WTC11 (cell line): ENCODE measurements at regions of chr11 and their contacts with region 1.

Region 1: DNA sequence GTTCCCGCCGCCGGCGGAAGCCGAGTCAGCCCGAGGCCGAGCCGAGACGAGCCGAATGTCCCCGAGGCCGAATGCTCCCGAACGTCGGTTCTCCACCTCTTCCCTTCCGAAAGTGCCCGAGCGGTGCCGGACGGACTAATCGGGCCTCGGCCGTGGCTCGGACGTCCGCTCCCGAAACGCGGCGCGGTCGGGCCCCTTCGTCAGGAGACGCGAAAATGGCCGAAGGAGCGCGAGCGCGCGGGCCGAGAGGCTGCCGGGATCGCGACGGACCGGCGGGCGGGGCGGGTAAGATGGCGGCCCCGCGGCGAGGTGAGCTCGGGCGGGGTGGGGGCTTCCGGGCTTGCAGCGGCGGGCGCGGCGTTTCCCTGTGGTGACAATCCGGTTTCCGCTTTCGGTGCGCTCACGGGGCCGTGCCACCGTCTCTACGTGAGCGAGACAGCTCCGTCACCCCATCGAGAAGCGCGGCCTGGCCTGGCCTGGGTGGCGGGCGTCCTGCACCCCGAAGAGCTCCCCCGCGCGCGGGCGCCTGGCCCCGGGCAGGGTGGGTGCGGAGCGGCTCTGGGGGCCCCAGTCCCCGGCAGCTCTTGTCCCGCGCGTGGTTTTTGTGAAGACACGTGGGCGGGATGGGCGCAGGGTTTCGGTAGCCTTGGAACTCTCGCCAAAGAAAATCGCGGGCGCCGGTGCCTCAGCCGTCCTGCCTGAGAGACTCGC is at the start of gene TMEM80:
- DNase-seq: peak; percentile 100
- ATAC-seq: peak; percentile 83
- H3K4me3 Mint-ChIP-seq: peak within 1 kb of the TSS; percentile 78
- H3K27ac Mint-ChIP-seq: peak within 1 kb of the TSS; percentile 91
- H3K4me1 Mint-ChIP-seq: peaks cover 34% of the 10 kb centered on the region
- H3K27me3 Mint-ChIP-seq: no peaks in the 10 kb centered on the region
- CTCF ChIP-seq: no peak
- total RNA-seq, gene TMEM80: 23.4 to 28.4 TPM (median 24.5 TPM) in 3 replicates

Region 2: DNA sequence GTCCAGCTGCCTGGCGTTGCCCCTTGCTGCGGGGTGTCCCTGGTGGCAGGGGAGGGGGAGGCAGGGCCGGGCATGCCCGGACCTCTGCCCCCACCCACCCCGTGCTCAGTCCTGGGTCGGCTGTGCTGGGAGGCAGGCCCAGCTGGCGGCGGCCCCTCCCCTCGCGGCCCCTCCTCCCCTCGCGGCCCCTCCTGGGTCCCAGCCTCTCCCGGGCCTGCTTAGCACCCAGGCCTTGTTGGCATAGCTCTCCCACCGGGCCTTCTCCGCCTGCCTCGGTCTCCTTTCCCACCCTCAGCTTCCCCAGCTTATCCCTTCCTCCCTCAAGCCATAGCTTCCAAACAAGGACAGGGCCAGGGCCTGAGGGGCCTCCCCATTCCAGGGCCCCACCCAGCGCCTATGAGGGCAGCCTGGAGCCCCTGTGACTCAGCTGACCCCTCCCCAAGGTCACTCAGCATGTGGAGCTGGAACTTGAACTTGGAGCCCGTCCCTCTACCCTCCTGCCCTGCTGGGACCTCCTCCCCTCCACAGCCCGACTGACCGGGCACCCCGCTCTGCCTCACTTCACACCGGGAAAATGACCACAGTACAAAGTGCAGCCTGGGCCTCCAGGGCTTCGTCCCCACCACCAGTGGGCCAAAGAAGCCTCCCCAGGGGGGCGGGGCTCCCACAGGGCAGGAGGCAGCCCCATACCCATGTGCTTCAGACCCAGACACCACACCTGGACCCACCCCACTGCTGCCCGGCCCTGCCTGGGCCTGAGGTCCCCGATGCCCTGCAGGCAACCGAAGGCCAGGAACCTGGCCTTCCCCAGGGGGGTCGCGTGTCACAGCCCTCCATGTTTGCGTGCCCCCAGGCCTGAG is 11.5 kb after region 1 on chr11:
- CTCF ChIA-PET with region 1: interaction called, 38 read pairs
- POLR2A ChIA-PET with region 1: interaction called, 5 read pairs
- DNase-seq: peak; percentile 47
- ATAC-seq: peak; percentile 46
- H3K4me3 Mint-ChIP-seq: peak overlapping the region; percentile 62
- H3K27ac Mint-ChIP-seq: no peak overlapping the region
- H3K4me1 Mint-ChIP-seq: peaks cover 30% of the 10 kb centered on the region
- H3K27me3 Mint-ChIP-seq: no peaks in the 10 kb centered on the region
- CTCF ChIP-seq: 0 out of 2 replicates have a peak, but pooled peaks have one; percentile 13

Region 3: DNA sequence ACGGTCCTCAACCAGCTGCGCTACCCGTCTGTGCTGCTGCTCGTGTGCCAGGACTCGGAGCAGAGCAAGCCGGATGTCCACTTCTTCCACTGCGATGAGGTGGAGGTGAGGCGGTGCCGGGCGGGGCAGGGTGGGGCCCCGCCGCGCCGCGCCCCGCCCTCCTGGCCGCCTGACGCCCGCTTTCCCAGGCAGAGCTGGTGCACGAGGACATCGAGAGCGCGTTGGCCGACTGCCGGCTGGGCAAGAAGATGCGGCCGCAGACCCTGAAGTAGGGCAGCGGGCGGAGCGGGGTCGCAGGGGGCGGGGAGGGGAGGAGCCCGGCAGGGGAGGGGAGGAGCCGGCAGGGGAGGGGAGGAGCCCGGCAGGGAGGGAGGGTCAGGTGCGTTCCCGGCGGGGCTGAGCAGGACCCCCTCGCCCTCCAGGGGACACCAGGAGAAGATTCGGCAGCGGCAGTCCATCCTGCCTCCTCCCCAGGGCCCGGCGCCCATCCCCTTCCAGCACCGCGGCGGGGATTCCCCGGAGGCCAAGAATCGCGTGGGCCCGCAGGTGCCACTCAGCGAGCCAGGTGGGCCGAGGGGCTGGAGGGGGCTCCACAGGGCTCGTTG is 25.1 kb after region 1 on chr11:
- CTCF ChIA-PET with region 1: interaction called, 20 read pairs
- POLR2A ChIA-PET with region 1: interaction called, 5 read pairs
- DNase-seq: peak; percentile 87
- ATAC-seq: peak; percentile 83
- H3K4me3 Mint-ChIP-seq: peak overlapping the region; percentile 47
- H3K27ac Mint-ChIP-seq: no peak overlapping the region
- H3K4me1 Mint-ChIP-seq: peaks cover 13% of the 10 kb centered on the region
- H3K27me3 Mint-ChIP-seq: peaks cover 16% of the 10 kb centered on the region
- CTCF ChIP-seq: no peak

Region 4: GRCh38 chr11:749731-750130 is 54.0 kb after region 1 on chr11:
- CTCF ChIA-PET with region 1: no interaction called
- POLR2A ChIA-PET with region 1: no interaction called
- DNase-seq: no peak
- ATAC-seq: no peak
- H3K4me3 Mint-ChIP-seq: peak overlapping the region; percentile 52
- H3K27ac Mint-ChIP-seq: peak overlapping the region; percentile 70
- H3K4me1 Mint-ChIP-seq: peaks cover 24% of the 10 kb centered on the region
- H3K27me3 Mint-ChIP-seq: no peaks in the 10 kb centered on the region
- CTCF ChIP-seq: no peak